ENCODE measurements at regions of chr10 and their contacts with region 1.

Region 1: GRCh38 chr10:96395931-96396877 is 37.4 kb upstream of the OPALIN start:
- DNase-seq: peak; percentile 56 to 79
- H3K4me3 ChIP-seq: peak overlapping the region; percentile 10 to 49 (median 22); a peak in 4 of 8 replicates
- H3K27ac ChIP-seq: no peak overlapping the region
- H3K4me1 ChIP-seq: peaks cover 0 to 6% (median 2%) of the 10 kb centered on the region in 4 experiments; a peak in 6 of 7 replicates
- H3K27me3 ChIP-seq: no peaks in the 10 kb centered on the region; a peak in 2 of 7 replicates
- CTCF ChIP-seq: peak; percentile 88 to 91 (median 89)
- EP300 ChIP-seq: no peak
- POLR2A ChIP-seq: no peak
- RAD21 ChIP-seq: peak; percentile 91 to 92

Region 2: DNA sequence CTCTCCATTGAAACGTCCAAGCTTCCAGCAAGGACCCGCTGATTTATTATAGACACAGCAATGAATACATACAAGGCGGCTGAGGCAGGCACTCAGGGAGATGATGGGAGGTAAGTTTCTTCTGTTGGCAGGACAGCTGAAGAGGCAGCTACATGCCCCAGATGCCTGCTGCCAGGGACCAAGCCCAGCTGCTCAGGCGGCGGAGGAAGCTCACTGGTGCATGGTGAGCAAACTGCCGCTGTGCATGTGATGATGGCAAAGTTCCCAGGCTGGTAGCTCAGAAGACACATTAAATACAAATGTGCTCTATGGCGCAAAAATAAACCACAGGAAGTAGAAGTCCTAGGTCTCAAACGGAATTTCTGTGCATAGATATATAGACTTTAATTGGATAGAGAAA is 89.7 kb before region 1 on chr10:
- CTCF ChIA-PET with region 1: no interaction called
- POLR2A ChIA-PET with region 1: no interaction called
- DNase-seq: no peak
- H3K4me3 ChIP-seq: no peak overlapping the region
- H3K27ac ChIP-seq: no peak overlapping the region
- H3K4me1 ChIP-seq: peaks cover 3 to 24% (median 22%) of the 10 kb centered on the region in 4 experiments
- H3K27me3 ChIP-seq: no peaks in the 10 kb centered on the region
- CTCF ChIP-seq: no peak
- EP300 ChIP-seq: no peak
- POLR2A ChIP-seq: no peak
- RAD21 ChIP-seq: no peak

Region 3: GRCh38 chr10:96346295-96346694 is 49.9 kb before region 1 on chr10:
- CTCF ChIA-PET with region 1: no interaction called
- POLR2A ChIA-PET with region 1: no interaction called
- DNase-seq: no peak
- H3K4me3 ChIP-seq: peak overlapping the region in 1 of 4 experiments; percentile 31; a peak in 1 of 8 replicates
- H3K27ac ChIP-seq: no peak overlapping the region
- H3K4me1 ChIP-seq: peaks cover 0 to 8% (median 7%) of the 10 kb centered on the region in 4 experiments; a peak in 6 of 7 replicates
- H3K27me3 ChIP-seq: peaks cover 0 to 1% (median 0%) of the 10 kb centered on the region in 4 experiments; a peak in 1 of 7 replicates
- CTCF ChIP-seq: no peak
- EP300 ChIP-seq: no peak
- POLR2A ChIP-seq: no peak
- RAD21 ChIP-seq: no peak

Region 4: DNA sequence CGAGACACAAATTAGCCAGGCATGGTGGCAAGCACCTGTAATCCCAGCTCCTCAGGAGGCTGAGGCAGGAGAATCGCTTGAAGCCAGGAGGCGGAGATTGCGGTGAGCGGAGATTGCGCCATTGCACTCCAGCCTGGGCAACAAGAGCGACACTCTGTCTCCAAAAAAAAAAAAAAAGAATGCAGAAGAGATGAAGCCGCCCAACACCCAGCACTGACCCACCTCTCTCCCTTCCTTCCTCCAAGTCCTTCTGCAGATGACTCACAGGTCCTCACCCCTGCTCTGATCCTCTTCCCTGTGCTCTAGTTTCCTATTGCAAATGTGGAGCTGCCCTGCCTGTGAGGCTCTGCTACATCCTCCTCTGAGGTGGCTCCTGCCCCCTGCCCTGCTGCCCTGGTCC is 15.4 kb before region 1 on chr10:
- CTCF ChIA-PET with region 1: interaction called, 151 read pairs
- POLR2A ChIA-PET with region 1: no interaction called
- DNase-seq: no peak
- H3K4me3 ChIP-seq: no peak overlapping the region
- H3K27ac ChIP-seq: no peak overlapping the region
- H3K4me1 ChIP-seq: peaks cover 0 to 5% (median 0%) of the 10 kb centered on the region in 4 experiments; a peak in 2 of 7 replicates
- H3K27me3 ChIP-seq: no peaks in the 10 kb centered on the region
- CTCF ChIP-seq: no peak
- EP300 ChIP-seq: no peak
- POLR2A ChIP-seq: no peak
- RAD21 ChIP-seq: no peak

Region 5: GRCh38 chr10:96410296-96410695 is 14.1 kb after region 1 on chr10:
- CTCF ChIA-PET with region 1: interaction called, 60 read pairs
- POLR2A ChIA-PET with region 1: no interaction called
- DNase-seq: no peak
- H3K4me3 ChIP-seq: no peak overlapping the region
- H3K27ac ChIP-seq: no peak overlapping the region
- H3K4me1 ChIP-seq: no peaks in the 10 kb centered on the region; a peak in 1 of 7 replicates
- H3K27me3 ChIP-seq: no peaks in the 10 kb centered on the region
- CTCF ChIP-seq: no peak
- EP300 ChIP-seq: no peak
- POLR2A ChIP-seq: no peak
- RAD21 ChIP-seq: no peak

Region 6: DNA sequence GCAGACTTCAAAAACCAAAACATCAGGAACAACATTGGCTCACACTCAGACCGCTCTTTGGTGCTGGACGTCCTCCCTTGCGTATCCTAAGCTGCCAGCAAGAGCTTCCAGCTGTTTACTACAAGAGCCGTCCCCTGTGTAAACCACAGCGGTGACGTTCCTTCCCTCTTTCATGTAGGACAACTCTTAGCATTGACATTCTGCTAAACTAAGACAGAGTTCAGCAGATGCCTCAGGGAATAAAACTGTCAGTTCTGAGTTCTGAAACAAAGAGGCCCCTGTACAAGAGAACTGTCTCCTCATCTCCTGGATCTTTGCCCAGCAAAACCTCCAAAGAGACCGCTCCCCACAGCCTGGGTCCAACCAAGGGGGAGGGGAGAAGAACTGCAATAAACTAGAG is 20.4 kb after region 1 on chr10:
- CTCF ChIA-PET with region 1: interaction called, 60 read pairs
- POLR2A ChIA-PET with region 1: no interaction called
- DNase-seq: peak in 1 of 2 experiments; percentile 27
- H3K4me3 ChIP-seq: no peak overlapping the region
- H3K27ac ChIP-seq: no peak overlapping the region
- H3K4me1 ChIP-seq: no peaks in the 10 kb centered on the region
- H3K27me3 ChIP-seq: no peaks in the 10 kb centered on the region
- CTCF ChIP-seq: no peak
- EP300 ChIP-seq: no peak
- POLR2A ChIP-seq: no peak
- RAD21 ChIP-seq: no peak

Region 7: GRCh38 chr10:96496281-96496925 is 100.2 kb after region 1 on chr10:
- CTCF ChIA-PET with region 1: interaction called, 20 read pairs
- POLR2A ChIA-PET with region 1: no interaction called
- DNase-seq: peak in 1 of 2 experiments; percentile 61
- H3K4me3 ChIP-seq: no peak overlapping the region
- H3K27ac ChIP-seq: no peak overlapping the region
- H3K4me1 ChIP-seq: peaks cover 0 to 3% (median 0%) of the 10 kb centered on the region in 4 experiments; a peak in 1 of 7 replicates
- H3K27me3 ChIP-seq: no peaks in the 10 kb centered on the region
- CTCF ChIP-seq: no peak
- EP300 ChIP-seq: no peak
- POLR2A ChIP-seq: no peak
- RAD21 ChIP-seq: no peak

Measured in H1 (cell line).